ENCODE measurements at regions of chr6 and their contacts with region 1.

Region 1: DNA sequence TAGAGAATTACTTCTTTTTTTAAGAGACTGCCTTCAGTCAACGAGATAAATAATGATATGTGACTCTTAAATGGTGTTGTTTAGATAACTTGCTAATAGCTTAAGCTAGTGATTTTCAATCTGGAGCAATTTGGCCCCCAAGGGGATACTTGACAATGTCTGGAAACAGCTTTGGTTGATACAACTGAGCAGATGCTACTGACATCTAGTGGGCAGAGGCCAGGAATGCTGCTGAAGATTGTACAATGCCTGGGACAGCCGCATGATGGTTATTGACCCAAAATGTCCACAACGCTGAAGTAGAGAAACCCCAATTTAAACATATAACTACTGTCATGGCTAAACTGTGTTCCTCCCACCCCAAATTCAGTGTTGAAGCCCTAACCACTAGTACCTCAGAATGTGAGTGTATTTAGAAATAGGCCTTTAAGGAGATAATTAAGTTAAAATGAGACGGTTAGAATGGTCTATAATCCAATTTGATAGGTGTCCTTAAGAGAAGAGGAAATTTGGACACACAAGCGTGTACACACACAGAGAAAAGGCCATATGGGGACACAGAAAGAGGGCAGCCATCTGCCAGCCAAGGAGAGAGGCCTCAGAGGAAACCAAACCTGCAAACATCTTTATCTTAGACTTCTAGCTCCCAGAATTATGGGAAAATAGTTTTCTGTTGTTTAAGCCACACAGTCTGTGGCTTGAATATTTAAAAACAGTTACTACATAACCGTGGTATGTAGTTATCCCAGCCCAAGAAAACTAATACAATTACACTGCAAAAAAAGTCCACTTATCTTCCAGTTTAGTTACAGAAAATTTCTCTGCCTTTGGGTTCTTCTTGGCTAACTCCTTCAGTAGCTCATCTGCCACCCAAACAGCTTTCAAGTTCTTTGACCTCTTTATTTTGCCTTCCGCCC is 22.2 kb downstream of the RWDD2A start:
- DNase-seq: peak; percentile 43
- CTCF ChIP-seq: peak; percentile 88

Region 2: DNA sequence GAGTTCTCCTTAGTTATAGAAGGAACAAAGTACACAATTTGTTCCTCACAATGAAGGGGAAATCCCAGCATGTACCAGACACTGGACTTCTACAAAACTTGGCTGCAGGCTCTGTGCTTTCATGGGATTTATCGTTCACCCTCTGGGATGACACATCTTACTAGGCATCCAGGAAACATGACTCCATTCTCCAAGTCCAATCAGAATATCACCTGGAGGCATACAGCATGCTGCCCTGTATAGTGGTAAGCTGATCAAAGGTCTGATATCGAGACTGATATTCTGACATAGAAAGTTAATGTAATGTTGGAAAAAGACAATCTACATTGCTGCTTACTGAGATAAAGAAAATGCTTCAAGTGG is 15.5 kb before region 1 on chr6:
- CTCF ChIA-PET with region 1: interaction called, 25 read pairs
- POLR2A ChIA-PET with region 1: no interaction called
- DNase-seq: no peak
- CTCF ChIP-seq: no peak

Region 3: DNA sequence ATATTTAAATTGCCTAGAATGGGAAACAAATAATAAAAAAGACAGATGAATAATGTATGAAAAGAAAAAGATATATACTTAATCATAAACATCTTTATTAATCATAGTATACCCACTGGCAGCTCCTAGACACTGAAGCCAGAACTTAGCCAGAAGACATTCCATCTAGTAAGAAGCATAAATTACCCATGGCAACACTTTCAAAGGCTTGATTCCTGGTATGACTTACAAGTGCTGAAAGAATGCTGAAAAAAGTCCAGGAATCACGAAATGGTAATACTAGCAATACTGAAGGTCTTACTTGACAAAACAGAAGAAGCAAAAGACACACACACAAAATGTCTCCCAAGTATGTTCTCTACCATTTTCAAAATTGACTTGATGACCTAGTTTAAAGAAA is 15.8 kb after region 1 on chr6:
- CTCF ChIA-PET with region 1: interaction called, 16 read pairs
- POLR2A ChIA-PET with region 1: no interaction called
- DNase-seq: no peak
- CTCF ChIP-seq: no peak

Region 4: DNA sequence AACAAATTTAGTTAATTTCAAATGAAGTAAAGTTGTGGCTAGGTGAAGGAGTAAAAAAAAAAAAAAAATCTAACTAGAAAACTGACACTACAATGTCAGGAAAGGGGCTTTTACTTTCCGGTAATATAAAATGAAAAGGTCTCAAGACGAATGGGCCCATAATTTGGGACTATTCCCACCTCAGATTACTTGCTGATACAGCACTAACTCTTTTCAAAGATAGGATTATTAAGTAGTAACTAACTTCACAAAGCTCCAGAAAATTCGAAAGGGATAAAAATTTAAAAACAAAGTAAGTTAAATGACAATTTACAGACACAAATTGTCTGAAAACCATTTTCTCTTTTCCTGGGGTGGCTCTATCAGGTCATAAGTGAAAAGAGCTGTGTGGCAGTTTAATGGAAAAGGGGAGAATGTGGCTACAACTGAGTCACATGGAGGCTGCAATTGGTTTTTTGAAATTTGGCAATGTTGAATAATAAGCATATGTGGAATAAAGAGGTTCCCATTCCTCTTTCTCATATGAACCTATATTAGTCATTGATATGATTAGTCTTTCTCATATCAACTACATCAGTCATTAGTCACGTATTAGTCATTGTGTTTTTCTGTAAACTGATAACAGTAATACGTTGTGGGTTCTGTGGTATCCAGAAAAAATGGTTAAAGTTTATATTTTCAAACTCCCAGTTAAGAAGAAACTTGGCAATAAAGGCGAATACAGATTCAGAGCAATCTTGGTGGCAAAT is 55.8 kb after region 1 on chr6:
- CTCF ChIA-PET with region 1: no interaction called
- POLR2A ChIA-PET with region 1: no interaction called
- DNase-seq: no peak
- CTCF ChIP-seq: no peak